Activated CD4-positive, alpha-beta T cell treated with anti-CD3 and anti-CD28 coated beads for 36 hours (primary cell): ENCODE measurements at regions of chr5 and their contacts with region 1.

Region 1: GRCh38 chr5:151150471-151151262 is 6.9 kb downstream of the ANXA6 start:
- DNase-seq: peak; percentile 87
- ATAC-seq: peak; percentile 64
- H3K4me3 Mint-ChIP-seq: peak overlapping the region; percentile 46
- H3K27ac Mint-ChIP-seq: peak overlapping the region; percentile 89
- H3K4me1 Mint-ChIP-seq: peaks cover 94% of the 10 kb centered on the region
- H3K27me3 Mint-ChIP-seq: no peaks in the 10 kb centered on the region

Region 2: GRCh38 chr5:150789943-150790611 is 360.6 kb before region 1 on chr5:
- CTCF ChIA-PET with region 1: interaction called, 3 read pairs
- POLR2A ChIA-PET with region 1: no interaction called
- intact Hi-C with region 1: loop called (anchors 1 to 2 kb)
- DNase-seq: peak; percentile 88
- ATAC-seq: peak; percentile 98
- H3K4me3 Mint-ChIP-seq: peak overlapping the region; percentile 56
- H3K27ac Mint-ChIP-seq: peak overlapping the region; percentile 88
- H3K4me1 Mint-ChIP-seq: peaks cover 65% of the 10 kb centered on the region
- H3K27me3 Mint-ChIP-seq: no peaks in the 10 kb centered on the region

Region 3: GRCh38 chr5:151080623-151081430 is 69.8 kb before region 1 on chr5 and contains the start of gene TNIP1:
- CTCF ChIA-PET with region 1: interaction called, 4 read pairs
- POLR2A ChIA-PET with region 1: interaction called, 11 read pairs
- intact Hi-C with region 1: loop called (anchors 1 to 2 kb)
- DNase-seq: peak; percentile 96
- ATAC-seq: peak; percentile 67
- H3K4me3 Mint-ChIP-seq: peak within 1 kb of the TSS; percentile 80
- H3K27ac Mint-ChIP-seq: peak within 1 kb of the TSS; percentile 91
- H3K4me1 Mint-ChIP-seq: peaks cover 74% of the 10 kb centered on the region
- H3K27me3 Mint-ChIP-seq: no peaks in the 10 kb centered on the region
- total RNA-seq, gene TNIP1: 351 to 408 TPM

Region 4: DNA sequence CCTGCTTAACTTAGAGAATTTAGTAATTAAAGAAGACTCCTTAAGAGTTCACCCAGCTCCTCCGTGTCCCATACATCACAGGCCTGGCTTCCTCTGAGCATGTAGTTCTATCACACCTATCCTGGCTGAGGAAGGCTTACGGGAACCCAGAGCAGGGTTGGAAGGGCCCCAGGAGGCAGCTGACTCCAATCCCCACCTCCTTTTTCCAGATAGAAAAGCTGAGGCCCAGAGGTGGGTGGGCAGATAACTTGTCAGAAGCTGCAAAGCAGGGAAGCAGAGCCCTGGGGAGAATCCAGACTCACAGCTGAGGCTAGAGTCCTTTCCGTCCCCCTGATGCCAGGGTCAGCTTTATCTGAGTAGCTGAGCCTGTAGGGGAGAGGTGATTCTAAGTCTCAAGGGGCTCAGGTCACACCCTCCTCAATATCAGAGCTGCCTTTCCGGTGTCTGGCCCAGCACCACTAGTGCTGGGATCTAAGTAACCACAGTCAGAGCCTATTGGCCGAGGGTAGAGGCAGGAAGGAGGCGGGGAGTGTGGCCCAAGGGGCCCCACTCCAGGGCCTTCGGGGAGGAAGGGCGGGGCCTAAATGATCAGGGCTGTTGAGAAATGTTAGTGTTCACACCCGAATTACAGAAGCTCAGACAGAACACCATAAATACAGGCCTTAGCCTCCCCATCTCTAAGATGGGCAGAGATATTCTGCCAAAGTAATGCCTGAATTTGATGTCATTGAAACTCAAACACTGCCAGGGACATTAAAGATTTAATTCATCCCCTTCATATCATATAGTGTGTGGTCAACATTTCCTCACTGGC is 63.3 kb after region 1 on chr5:
- CTCF ChIA-PET with region 1: interaction called, 3 read pairs
- POLR2A ChIA-PET with region 1: interaction called, 3 read pairs
- intact Hi-C with region 1: loop called in 1 of 2 experiments (anchors 2 kb)
- DNase-seq: peak; percentile 92
- ATAC-seq: peak; percentile 89
- H3K4me3 Mint-ChIP-seq: peak overlapping the region; percentile 74
- H3K27ac Mint-ChIP-seq: peak overlapping the region; percentile 97
- H3K4me1 Mint-ChIP-seq: peaks cover 83% of the 10 kb centered on the region
- H3K27me3 Mint-ChIP-seq: no peaks in the 10 kb centered on the region

Region 5: DNA sequence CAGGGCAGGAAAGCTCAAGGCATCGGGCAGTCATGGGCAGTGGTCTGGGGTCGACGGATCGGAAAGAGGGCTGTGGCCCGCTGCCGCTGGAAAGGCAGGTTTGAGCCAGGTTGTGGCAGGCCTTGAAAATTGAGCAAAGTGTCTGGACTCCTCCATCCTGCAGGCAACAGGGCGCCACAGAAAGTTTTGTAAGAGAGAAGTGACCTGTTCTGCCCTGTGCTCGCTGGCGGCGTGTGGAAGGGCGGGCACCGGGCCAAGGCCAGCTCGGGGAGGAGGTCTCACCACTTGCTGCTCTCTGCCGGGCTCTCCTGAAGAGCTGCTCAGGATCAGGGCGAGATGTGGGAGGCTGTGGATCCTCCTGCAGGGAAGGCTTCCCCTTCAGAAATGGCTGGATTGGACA is 481.9 kb after region 1 on chr5:
- CTCF ChIA-PET with region 1: no interaction called
- POLR2A ChIA-PET with region 1: no interaction called
- intact Hi-C with region 1: no loop called
- DNase-seq: no peak
- ATAC-seq: no peak
- H3K4me3 Mint-ChIP-seq: no peak overlapping the region
- H3K27ac Mint-ChIP-seq: no peak overlapping the region
- H3K4me1 Mint-ChIP-seq: no peaks in the 10 kb centered on the region
- H3K27me3 Mint-ChIP-seq: peaks cover 4% of the 10 kb centered on the region

Region 6: DNA sequence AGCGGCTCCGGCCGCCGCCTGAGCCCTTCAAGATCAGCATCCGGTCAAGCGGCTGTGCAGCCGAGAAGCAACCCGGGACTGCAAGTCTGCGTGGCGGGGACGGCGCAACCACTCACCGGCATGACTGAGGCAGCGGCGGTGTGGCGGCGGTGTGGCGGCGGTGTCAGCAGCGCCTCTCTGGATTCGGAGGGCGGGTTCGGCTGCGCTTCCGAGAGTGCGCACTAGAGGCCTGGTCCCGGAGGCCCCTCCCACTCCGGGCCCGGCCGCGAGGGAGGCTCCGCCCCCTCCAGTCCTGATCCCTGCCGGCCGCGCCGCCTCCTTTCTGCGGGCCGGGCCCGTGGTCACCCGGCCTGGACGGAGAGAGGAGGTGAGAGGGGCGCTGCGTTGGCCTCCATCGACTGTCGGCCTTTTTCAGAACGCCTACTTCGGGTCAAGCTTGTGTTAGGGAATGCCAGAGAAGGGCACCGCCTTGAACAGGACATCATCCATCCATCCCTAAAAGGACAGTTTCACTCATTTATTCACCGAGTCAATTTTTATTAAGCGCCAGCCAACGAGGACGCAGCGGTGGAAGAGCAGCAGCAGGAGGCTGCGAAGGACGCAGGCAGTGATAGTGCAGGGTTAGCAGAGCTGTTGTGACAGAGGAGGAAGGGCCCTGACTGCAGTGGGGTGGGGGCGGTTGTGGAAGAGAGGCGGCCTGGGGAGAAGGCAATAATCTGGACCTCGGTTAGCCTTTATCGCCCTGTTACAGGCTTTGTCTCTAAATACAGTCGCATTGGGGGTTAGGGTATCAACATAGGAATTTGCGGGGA is 608.0 kb after region 1 on chr5 and contains the start of gene ATOX1:
- CTCF ChIA-PET with region 1: no interaction called
- POLR2A ChIA-PET with region 1: no interaction called
- intact Hi-C with region 1: loop called in 1 of 2 experiments (anchors 5 kb)
- DNase-seq: peak; percentile 95
- ATAC-seq: peak; percentile 99
- H3K4me3 Mint-ChIP-seq: peak within 1 kb of the TSS; percentile 98
- H3K27ac Mint-ChIP-seq: peak within 1 kb of the TSS; percentile 98
- H3K4me1 Mint-ChIP-seq: peaks cover 33% of the 10 kb centered on the region
- H3K27me3 Mint-ChIP-seq: no peaks in the 10 kb centered on the region
- total RNA-seq, gene ATOX1: 74.8 to 85.9 TPM